ENCODE measurements at regions of chrX and their contacts with region 1.

Region 1: GRCh38 chrX:149938427-149939270 is at the start of gene EOLA2:
- DNase-seq: peak; percentile 89 to 95
- H3K4me3 ChIP-seq: peak within 1 kb of the TSS; percentile 60
- H3K4me3 Mint-ChIP-seq: peak within 1 kb of the TSS; percentile 85
- H3K27ac Mint-ChIP-seq: peak within 1 kb of the TSS; percentile 98
- H3K4me1 ChIP-seq: no peaks in the 10 kb centered on the region
- H3K4me1 Mint-ChIP-seq: no peaks in the 10 kb centered on the region
- H3K27me3 ChIP-seq: no peaks in the 10 kb centered on the region
- H3K27me3 Mint-ChIP-seq: no peaks in the 10 kb centered on the region
- CTCF ChIP-seq: peak; percentile 41 to 66
- total RNA-seq, gene EOLA2: 28.0 and 32.1 TPM in 2 replicates

Region 2: DNA sequence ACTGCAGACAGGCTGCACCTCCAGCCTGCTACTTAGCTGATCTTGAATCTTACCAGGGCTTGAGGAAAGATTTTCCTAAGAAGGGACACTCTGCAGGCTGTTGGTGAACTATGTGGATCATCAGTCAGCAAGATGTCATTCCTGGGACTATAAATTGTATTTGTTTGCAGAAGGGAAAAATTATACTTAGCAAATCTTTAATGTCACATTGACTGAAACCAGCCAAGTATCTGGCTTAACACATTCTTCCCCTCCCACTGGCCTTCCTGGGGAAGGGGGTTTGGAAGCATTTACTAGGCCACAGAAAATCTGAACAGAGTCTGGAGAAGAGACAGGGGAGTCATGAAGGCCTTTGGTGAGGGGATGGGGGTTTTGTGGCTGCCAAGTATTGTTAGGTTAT is 156.3 kb after region 1 on chrX:
- CTCF ChIA-PET with region 1: no interaction called
- POLR2A ChIA-PET with region 1: no interaction called
- intact Hi-C with region 1: no loop called
- DNase-seq: no peak
- H3K4me3 ChIP-seq: no peak overlapping the region
- H3K4me3 Mint-ChIP-seq: no peak overlapping the region
- H3K27ac Mint-ChIP-seq: no peak overlapping the region
- H3K4me1 ChIP-seq: no peaks in the 10 kb centered on the region
- H3K4me1 Mint-ChIP-seq: no peaks in the 10 kb centered on the region
- H3K27me3 ChIP-seq: no peaks in the 10 kb centered on the region
- H3K27me3 Mint-ChIP-seq: peaks cover 2% of the 10 kb centered on the region
- CTCF ChIP-seq: no peak

Region 3: GRCh38 chrX:150568320-150569154 is 629.9 kb after region 1 on chrX and contains the start of gene MTM1:
- CTCF ChIA-PET with region 1: no interaction called
- POLR2A ChIA-PET with region 1: interaction called, 11 read pairs
- intact Hi-C with region 1: no loop called
- DNase-seq: peak; percentile 94 to 95
- H3K4me3 ChIP-seq: peak within 1 kb of the TSS; percentile 75
- H3K4me3 Mint-ChIP-seq: peak within 1 kb of the TSS; percentile 70
- H3K27ac Mint-ChIP-seq: peak within 1 kb of the TSS; percentile 76
- H3K4me1 ChIP-seq: peaks cover 10% of the 10 kb centered on the region; the same call in 1 of the 2 replicates
- H3K4me1 Mint-ChIP-seq: no peaks in the 10 kb centered on the region
- H3K27me3 ChIP-seq: no peaks in the 10 kb centered on the region
- H3K27me3 Mint-ChIP-seq: no peaks in the 10 kb centered on the region
- CTCF ChIP-seq: no peak
- total RNA-seq, gene MTM1: 9.7 and 10.0 TPM in 2 replicates

Measured in Caco-2 (cell line).